BJ (cell line): ENCODE measurements at regions of chr10 and their contacts with region 1.

Region 1: GRCh38 chr10:93746844-93747284 is 10.9 kb upstream of the LGI1 start:
- DNase-seq: peak; percentile 98
- H3K4me3 ChIP-seq: no peak overlapping the region
- H3K27me3 ChIP-seq: no peaks in the 10 kb centered on the region; the same call in 1 of the 2 replicates
- CTCF ChIP-seq: peak; percentile 26; the same call in 1 of the 2 replicates

Region 2: GRCh38 chr10:93702211-93703001 is 44.5 kb before region 1 on chr10 and contains the start of gene FRA10AC1:
- CTCF ChIA-PET with region 1: interaction called, 13 read pairs
- POLR2A ChIA-PET with region 1: no interaction called
- DNase-seq: no peak
- H3K4me3 ChIP-seq: peak within 1 kb of the TSS; percentile 50
- H3K27me3 ChIP-seq: no peaks in the 10 kb centered on the region; the same call in 1 of the 2 replicates
- CTCF ChIP-seq: peak; percentile 43
- polyA plus RNA-seq, gene FRA10AC1: 2.1 and 5.1 TPM in 2 replicates

Region 3: DNA sequence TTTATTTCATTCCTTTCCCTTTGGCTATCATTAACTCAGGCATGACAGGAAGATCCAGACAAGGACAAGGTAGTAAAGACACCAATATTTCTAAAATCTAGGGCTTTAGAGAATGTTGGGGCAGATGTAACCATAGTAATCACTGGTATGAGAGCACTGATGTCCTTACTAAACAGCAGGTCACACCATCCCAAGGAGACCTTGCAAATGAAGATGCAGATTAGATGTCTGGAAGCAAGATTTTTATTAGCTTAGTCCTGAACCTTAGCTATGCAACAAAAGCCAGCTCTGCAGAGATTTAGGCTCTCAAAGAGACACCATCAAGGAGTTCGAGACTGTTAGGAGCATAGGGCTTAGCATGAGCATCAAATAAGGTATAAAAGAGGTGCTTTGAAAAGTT is 20.8 kb before region 1 on chr10:
- CTCF ChIA-PET with region 1: interaction called, 13 read pairs
- POLR2A ChIA-PET with region 1: no interaction called
- DNase-seq: no peak
- H3K4me3 ChIP-seq: no peak overlapping the region
- H3K27me3 ChIP-seq: peaks cover 14% of the 10 kb centered on the region
- CTCF ChIP-seq: no peak

Region 4: GRCh38 chr10:93806903-93807302 is 60.0 kb after region 1 on chr10:
- CTCF ChIA-PET with region 1: interaction called, 12 read pairs
- POLR2A ChIA-PET with region 1: no interaction called
- DNase-seq: no peak
- H3K4me3 ChIP-seq: no peak overlapping the region
- H3K27me3 ChIP-seq: peaks cover 7% of the 10 kb centered on the region
- CTCF ChIP-seq: no peak

Region 5: DNA sequence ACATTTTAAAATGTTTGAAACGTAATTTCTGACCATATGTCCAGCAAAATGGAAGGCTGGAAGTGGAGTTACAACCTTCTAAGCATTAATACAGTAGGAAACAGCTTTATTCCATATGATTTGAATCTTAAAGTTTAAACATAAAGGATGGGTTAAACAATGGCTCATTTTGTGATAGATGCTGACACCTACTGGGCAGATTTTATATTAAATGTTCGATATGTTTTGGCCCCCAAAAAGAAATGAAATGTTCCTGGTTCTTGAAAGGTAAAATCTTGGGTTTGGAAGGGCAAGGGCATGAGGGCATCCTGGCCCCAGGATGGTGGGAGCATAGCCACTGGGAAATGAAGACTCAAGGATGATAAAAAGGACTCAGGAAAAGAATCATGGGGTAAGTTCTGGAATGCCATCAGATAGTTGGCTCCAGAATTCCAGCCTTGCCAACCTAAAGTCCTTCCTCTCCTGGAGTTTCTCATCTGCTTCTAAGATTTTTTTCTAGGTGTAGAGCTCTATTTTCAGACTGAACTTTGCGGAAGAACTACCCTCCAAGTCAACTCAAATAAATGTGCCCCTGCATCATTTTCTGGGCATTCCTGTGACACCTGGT is 112.3 kb after region 1 on chr10:
- CTCF ChIA-PET with region 1: interaction called, 18 read pairs
- POLR2A ChIA-PET with region 1: no interaction called
- DNase-seq: no peak
- H3K4me3 ChIP-seq: no peak overlapping the region
- H3K27me3 ChIP-seq: peaks cover 3% of the 10 kb centered on the region
- CTCF ChIP-seq: peak; percentile 41; the same call in 1 of the 2 replicates

Region 6: GRCh38 chr10:94133239-94133638 is 386.4 kb after region 1 on chr10:
- CTCF ChIA-PET with region 1: no interaction called
- POLR2A ChIA-PET with region 1: no interaction called
- DNase-seq: no peak
- H3K4me3 ChIP-seq: no peak overlapping the region
- H3K27me3 ChIP-seq: no peaks in the 10 kb centered on the region
- CTCF ChIP-seq: no peak